Activated B cell treated with CpG ODN at 0.5 μM for 24 hours (primary cell): ENCODE measurements at regions of chr22 and their contacts with region 1.

Region 1: DNA sequence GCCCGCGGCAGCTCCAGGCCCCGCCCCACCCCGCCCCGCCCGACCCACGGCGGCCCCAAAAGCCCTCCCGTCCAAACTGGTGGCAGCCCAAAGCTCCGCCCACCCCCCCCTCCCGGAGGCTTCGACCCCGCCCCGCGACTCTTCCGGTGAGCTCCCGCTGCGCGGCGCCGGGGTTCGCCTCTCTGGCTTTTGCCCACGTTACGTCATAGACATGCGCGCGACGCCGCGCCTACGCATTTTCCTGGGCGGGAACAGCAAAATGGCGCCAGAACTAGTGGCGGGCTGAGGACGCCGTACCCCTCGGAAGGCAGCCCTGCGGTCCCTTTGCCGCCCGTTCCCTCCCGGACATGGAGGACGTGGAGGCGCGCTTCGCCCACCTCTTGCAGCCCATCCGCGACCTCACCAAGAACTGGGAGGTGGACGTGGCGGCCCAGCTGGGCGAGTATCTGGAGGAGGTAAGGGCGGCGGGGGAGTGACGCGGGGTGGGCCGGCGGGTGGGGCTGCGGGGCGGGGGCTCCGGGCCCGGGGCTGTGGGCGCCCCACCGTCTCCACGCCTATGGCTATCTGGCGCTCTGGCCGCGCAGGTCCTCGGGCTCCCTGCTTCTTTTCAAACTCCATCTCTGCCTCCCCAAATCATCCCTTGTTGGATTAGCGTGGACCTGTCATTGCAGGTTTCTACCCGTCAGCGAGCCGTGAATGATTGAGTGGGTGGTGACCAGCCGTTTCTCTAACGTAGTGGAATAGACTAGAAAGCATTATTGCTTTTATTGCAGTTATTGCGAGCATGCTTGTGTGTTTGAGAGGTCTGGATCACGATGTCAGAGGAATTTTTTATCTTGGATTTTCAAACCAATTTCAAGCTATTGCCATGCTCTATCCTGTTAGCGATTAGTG is at the start of gene NCAPH2:
- DNase-seq: peak; percentile 96
- ATAC-seq: peak; percentile 74
- H3K4me3 Mint-ChIP-seq: peak within 1 kb of the TSS; percentile 94
- H3K27ac Mint-ChIP-seq: peak within 1 kb of the TSS; percentile 94
- H3K4me1 Mint-ChIP-seq: peaks cover 20% of the 10 kb centered on the region
- H3K27me3 Mint-ChIP-seq: no peaks in the 10 kb centered on the region
- CTCF ChIP-seq: no peak
- total RNA-seq, gene NCAPH2: 63.9 and 68.2 TPM in 2 replicates

Region 2: DNA sequence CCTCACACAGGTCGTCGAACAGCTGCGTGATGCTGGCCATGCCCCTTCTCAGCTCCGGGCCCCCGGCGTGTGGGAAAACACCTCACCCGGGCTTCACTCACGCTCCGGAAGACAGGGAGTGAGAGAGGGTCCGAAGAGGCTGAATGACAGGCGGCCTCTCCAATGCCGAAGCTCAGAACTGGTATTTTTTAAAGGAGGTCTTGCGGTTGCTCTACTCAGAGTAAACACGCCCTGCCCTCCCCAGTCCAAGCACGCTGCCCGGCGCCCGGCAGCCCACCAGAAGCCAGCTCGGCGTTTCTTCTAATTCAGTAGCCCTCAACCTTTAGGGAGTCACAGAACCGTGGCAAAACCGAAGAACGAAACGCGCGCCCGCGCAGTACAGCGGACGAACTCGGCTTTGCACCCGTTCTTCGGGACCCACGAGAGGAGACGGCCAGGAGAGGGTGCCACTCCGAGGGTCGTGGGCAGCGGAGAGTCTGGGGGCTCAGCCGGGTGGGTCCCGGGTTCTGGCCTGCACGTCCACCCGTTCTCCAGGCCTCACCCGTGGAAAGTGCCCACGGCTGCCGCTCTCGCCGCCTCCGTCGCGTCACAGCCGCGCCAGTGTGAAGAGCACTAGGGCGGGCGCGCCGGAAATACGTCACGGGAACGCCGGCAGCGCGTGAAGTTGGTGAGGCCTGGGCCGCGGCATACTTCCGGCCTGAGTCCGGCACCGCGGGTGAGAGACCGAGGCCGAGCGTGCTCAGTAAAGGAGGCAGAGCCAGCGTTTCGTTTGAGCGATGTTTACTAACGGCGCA is 263.6 kb before region 1 on chr22 and contains the start of gene TUBGCP6:
- CTCF ChIA-PET with region 1: no interaction called
- POLR2A ChIA-PET with region 1: interaction called, 10 read pairs
- intact Hi-C with region 1: loop called (anchors 1 kb)
- DNase-seq: peak; percentile 96
- ATAC-seq: peak; percentile 76
- H3K4me3 Mint-ChIP-seq: peak within 1 kb of the TSS; percentile 100
- H3K27ac Mint-ChIP-seq: peak within 1 kb of the TSS; percentile 100
- H3K4me1 Mint-ChIP-seq: peaks cover 52% of the 10 kb centered on the region
- H3K27me3 Mint-ChIP-seq: no peaks in the 10 kb centered on the region
- CTCF ChIP-seq: no peak
- total RNA-seq, gene TUBGCP6: 87.5 and 103 TPM in 2 replicates

Region 3: GRCh38 chr22:50357776-50358175 is 150.5 kb before region 1 on chr22:
- CTCF ChIA-PET with region 1: no interaction called
- POLR2A ChIA-PET with region 1: no interaction called
- intact Hi-C with region 1: no loop called
- DNase-seq: no peak
- ATAC-seq: no peak
- H3K4me3 Mint-ChIP-seq: no peak overlapping the region
- H3K27ac Mint-ChIP-seq: no peak overlapping the region
- H3K4me1 Mint-ChIP-seq: peaks cover 16% of the 10 kb centered on the region
- H3K27me3 Mint-ChIP-seq: no peaks in the 10 kb centered on the region
- CTCF ChIP-seq: no peak

Region 4: DNA sequence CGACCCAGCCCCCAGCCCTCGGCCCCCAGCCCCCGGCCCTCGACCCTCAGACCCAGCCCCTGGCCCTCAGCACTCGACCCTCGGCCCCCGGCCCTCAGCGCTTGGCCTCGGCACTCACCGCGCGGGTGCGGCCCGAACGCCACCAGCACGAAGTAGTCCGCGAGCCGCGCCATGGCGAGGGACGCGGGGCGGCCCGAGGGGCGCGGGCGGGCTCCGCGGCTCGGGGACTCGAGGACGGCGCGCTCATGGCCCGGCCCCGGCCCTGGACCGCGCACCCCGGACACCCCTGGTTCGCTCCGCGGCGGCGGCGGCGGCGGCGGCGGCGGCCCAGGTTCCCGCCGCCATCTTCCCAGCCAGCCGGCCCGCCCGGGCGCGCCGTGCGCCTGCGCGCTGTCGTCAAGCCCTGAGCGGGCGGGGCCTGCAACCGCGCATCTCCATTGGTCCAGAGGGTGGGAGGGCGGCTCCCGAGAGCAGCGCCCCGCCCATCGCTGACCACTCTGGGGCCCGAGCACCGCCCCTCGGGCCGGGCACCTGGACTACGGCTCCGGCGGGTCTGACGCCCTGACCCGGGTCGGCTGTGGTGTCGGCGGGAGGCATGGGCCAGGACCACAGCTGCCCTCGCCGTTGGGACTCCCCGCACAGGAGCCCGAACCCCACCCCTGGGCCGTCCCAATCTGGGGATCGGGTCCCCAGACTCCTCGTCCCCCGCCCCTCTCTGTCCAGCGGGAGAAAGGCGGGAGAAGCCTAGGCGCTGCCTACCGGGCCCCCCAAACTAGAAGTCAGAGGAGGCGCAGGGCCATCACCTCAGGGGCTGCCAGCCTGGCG is 33.4 kb before region 1 on chr22 and contains the start of gene SBF1:
- CTCF ChIA-PET with region 1: no interaction called
- POLR2A ChIA-PET with region 1: interaction called, 15 read pairs
- intact Hi-C with region 1: loop called (anchors 1 kb)
- DNase-seq: peak; percentile 89
- ATAC-seq: peak; percentile 79
- H3K4me3 Mint-ChIP-seq: peak within 1 kb of the TSS; percentile 88
- H3K27ac Mint-ChIP-seq: peak within 1 kb of the TSS; percentile 78
- H3K4me1 Mint-ChIP-seq: peaks cover 49% of the 10 kb centered on the region
- H3K27me3 Mint-ChIP-seq: no peaks in the 10 kb centered on the region
- CTCF ChIP-seq: no peak
- total RNA-seq, gene SBF1: 114 and 144 TPM in 2 replicates

Region 5: DNA sequence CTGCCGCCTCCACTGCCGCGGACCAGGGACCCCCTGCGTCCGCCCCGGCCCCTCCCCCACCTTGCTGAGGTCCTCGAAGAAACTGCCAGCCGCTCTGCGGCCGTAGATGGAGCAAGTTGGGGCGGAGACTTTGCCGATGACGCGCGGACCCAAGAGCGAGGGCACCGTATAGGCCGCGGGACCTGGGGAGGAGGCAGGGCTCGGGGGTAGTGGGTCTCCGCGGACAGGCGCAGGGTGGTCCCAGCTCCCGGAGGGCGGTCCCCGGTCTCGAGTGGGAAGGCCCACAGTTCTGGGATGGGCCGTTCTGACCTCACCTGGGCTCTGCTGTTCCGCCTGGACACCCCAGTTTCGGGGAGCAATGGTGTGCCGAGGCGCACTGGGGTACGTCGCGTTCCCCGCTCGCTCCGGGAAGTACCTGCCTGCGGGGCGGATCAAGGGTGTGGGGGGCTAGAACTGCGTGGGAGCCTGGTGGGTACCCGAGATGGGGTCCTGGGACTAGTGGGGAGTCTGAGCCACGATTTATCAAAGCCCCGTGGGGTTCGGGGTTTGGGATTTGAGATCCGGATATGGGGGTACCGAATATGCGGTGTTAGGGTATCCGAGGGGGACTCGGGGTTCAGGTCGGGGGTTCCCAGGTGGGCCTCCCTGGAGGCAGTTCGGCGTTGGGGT is 22.8 kb after region 1 on chr22:
- CTCF ChIA-PET with region 1: interaction called, 36 read pairs
- POLR2A ChIA-PET with region 1: interaction called, 175 read pairs
- intact Hi-C with region 1: no loop called
- DNase-seq: peak; percentile 86
- ATAC-seq: peak; percentile 53
- H3K4me3 Mint-ChIP-seq: peak overlapping the region; percentile 92
- H3K27ac Mint-ChIP-seq: peak overlapping the region; percentile 99
- H3K4me1 Mint-ChIP-seq: peaks cover 55% of the 10 kb centered on the region
- H3K27me3 Mint-ChIP-seq: no peaks in the 10 kb centered on the region
- CTCF ChIP-seq: no peak

Region 6: DNA sequence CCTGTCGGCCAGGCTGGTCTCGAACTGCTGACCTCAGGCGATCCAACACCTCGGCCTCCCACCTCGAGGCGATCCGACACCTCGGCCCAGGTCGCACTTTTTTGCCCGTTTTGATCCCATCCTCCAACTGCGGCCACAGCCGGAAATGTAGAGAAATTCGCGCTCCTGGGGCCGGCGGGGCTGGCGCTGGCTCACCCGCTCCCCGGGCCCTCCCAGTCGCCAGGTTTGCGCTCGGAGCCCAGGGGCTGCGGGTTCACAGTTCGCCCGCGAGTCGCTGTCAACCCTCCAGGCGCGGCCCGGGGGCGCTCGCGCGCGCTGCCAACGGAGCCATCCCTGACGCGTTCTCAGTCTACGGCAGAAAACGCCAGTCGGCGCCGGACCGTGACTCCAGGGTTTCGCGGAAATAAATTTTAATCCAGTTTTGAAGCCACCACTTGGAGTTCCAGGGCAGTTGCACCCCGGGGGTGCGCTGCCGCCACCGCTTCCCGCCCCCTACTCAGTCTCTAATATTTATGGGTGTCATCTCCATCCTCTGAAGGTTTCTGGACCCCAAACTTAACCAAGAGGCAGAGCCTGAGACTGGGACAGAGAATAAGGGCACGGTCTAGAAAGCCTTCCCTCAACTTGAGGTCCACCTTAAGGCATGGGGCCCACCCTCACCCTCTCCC is 36.0 kb after region 1 on chr22:
- CTCF ChIA-PET with region 1: no interaction called
- POLR2A ChIA-PET with region 1: interaction called, 33 read pairs
- intact Hi-C with region 1: loop called (anchors 1 kb)
- DNase-seq: peak; percentile 80
- ATAC-seq: peak; percentile 38
- H3K4me3 Mint-ChIP-seq: peak overlapping the region; percentile 60
- H3K27ac Mint-ChIP-seq: peak overlapping the region; percentile 82
- H3K4me1 Mint-ChIP-seq: peaks cover 56% of the 10 kb centered on the region
- H3K27me3 Mint-ChIP-seq: no peaks in the 10 kb centered on the region
- CTCF ChIP-seq: no peak

Region 7: GRCh38 chr22:50612528-50613221 is 104.4 kb after region 1 on chr22:
- CTCF ChIA-PET with region 1: no interaction called
- POLR2A ChIA-PET with region 1: no interaction called
- intact Hi-C with region 1: no loop called
- DNase-seq: no peak
- ATAC-seq: peak; percentile 42
- H3K4me3 Mint-ChIP-seq: no peak overlapping the region
- H3K27ac Mint-ChIP-seq: no peak overlapping the region
- H3K4me1 Mint-ChIP-seq: no peaks in the 10 kb centered on the region
- H3K27me3 Mint-ChIP-seq: peaks cover 28% of the 10 kb centered on the region
- CTCF ChIP-seq: no peak